H1 (cell line): ENCODE measurements at regions of chr14 and their contacts with region 1.

Region 1: DNA sequence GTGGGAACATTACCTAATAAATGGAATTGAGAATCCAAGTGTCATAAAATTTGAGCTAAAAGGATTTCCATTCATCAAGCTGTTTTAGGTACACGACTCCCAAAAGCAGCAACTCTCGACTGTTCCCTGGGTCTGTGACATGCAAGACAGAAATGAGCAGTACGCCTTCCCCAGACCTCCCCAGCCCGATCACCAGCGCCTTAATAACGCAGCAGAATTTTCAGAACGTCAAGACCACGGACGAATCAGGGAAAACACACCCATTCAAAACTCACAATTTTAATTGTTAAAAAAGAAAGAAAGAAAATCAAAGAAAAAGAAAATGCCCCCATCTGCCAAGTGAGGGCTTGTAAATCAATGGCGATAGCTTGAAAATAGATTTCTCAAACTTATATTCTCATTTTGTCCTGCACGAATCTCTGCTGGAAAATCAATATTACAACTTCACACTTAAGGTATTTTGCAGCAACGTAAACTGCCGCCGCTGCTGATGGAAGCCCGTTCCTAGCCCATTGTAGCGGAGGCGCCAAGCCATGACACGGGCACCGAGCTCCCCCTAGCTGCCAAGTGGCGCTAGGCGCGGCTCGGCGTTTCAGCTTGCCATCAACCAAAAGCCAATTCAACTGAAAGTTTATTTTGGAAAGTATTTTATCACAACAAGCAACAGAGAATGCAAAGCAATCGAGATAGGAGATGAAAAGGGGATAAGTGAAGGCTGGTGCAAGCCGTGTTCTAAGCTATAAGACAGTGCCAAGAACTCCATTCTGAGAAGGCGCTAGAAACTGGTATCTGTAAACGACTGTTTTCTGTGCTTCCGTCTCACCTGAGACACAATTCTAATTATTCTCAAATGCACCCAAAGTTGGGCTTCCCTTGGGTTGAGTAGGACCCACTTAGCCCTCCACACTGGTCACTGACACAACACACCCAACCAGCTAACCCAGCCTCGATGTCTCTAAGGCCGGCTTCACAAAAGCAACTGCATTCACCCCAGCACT is 5.5 kb downstream of the BCL11B start:
- DNase-seq: peak in 1 of 2 experiments; percentile 89
- H3K4me3 ChIP-seq: peak overlapping the region in 3 of 4 experiments; percentile 3 to 42 (median 23); a peak in 2 of 8 replicates
- H3K27ac ChIP-seq: no peak overlapping the region
- H3K4me1 ChIP-seq: peaks cover 27 to 36% (median 32%) of the 10 kb centered on the region in 4 experiments
- H3K27me3 ChIP-seq: peaks cover 0 to 7% (median 3%) of the 10 kb centered on the region in 4 experiments; a peak in 3 of 7 replicates
- CTCF ChIP-seq: peak; percentile 93 to 99 (median 97)
- EP300 ChIP-seq: no peak; a peak in 1 of 3 replicates
- POLR2A ChIP-seq: no peak
- RAD21 ChIP-seq: peak; percentile 99

Region 2: DNA sequence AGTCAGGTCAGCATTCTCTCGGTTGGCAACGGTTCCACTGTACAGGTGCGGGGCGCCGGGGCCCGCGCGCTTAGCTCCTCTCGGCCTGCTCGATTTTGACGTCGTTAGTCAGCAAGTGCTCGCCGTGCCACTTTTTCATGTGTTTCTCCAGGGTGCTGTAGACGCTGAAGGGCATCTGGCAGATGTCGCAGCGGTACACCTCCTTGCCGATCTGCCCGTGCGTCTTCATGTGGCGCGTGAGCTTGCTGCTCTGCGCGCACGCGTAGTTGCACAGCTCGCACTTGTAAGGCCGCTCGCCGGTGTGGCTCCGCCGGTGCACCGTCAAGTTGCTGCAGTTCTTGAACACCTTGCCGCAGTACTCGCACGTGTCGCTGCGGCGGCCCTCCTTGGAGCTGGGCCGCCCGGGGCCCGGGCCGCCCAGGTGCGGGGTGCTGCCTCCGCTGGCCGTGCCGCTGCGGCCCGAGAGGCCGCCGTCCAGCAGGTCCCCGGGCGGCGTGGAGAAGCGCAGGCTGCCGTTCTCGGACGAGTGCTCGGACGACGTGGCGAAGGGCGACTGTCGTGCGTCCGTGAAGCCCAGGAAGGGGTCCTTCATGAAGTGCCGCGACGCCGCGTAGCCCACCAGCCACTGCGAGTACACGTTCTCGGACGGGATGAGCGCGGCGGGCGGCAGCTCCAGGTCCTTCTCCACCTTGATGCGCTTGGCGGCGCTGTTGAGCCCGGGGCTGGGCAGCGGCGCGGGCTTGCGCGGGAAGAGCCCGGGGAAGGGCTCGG is 92.2 kb before region 1 on chr14:
- CTCF ChIA-PET with region 1: interaction called, 12 read pairs
- POLR2A ChIA-PET with region 1: interaction called, 4 read pairs
- DNase-seq: peak in 1 of 2 experiments; percentile 68
- H3K4me3 ChIP-seq: no peak overlapping the region
- H3K27ac ChIP-seq: no peak overlapping the region
- H3K4me1 ChIP-seq: peaks cover 0 to 11% (median 8%) of the 10 kb centered on the region in 4 experiments; a peak in 6 of 7 replicates
- H3K27me3 ChIP-seq: no peaks in the 10 kb centered on the region
- CTCF ChIP-seq: peak; percentile 46 to 53 (median 47)
- EP300 ChIP-seq: no peak
- POLR2A ChIP-seq: no peak
- RAD21 ChIP-seq: peak; percentile 34 to 47; a peak in 3 of 4 replicates

Region 3: GRCh38 chr14:99199846-99200653 is 66.4 kb before region 1 on chr14:
- CTCF ChIA-PET with region 1: interaction called, 19 read pairs
- POLR2A ChIA-PET with region 1: interaction called, 4 read pairs
- DNase-seq: no peak
- H3K4me3 ChIP-seq: no peak overlapping the region
- H3K27ac ChIP-seq: no peak overlapping the region
- H3K4me1 ChIP-seq: peaks cover 0 to 5% (median under 1%) of the 10 kb centered on the region in 4 experiments; a peak in 1 of 7 replicates
- H3K27me3 ChIP-seq: no peaks in the 10 kb centered on the region
- CTCF ChIP-seq: peak in 1 of 3 experiments; percentile 1; a peak in 2 of 4 replicates
- EP300 ChIP-seq: no peak
- POLR2A ChIP-seq: no peak
- RAD21 ChIP-seq: peak; percentile 5 to 37; a peak in 3 of 4 replicates

Region 4: DNA sequence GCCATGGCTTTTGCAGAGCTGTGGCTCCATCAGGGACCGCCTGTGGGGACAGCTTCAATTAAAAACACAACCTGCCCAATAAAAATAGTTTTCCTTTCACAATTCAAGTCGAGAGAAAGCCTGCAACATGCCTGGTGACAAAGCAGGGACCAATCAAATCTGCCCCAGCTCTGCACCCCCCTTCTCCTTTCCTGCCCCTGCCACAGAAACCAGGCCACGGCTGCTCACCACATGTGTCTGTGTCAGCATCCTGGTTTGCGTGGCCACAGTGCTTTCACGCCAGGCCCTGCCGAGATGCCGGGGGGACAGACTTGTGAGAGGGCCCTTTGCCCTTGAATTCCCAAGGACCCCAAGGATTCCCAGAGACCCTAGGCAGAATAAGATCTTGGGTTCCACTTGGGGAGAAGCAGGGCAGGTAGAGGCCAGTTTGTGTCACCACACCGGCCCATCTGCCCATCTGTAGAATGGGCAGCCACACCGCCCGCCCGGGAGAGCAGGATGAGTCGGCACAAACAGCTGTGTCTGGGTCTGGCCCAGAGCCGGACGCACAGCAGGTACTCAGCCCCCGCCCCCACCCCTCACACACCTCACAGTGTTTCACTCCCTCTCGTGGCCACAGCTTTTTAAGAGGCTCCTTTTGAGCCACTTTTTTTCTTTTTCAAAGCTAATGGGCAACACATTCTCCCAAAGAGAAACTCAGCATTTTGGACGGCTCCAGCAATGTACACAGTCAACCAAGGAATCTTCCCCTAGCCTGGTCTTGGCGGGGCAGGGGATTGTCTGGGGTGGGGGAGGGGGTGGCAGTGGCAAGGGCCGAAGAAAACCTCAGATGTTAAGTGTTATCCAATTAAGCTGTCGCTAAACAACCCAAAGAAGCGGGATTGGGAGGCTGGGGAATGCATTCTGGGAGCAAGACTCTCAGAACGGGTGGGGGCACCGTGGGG is 36.0 kb before region 1 on chr14:
- CTCF ChIA-PET with region 1: interaction called, 45 read pairs
- POLR2A ChIA-PET with region 1: interaction called, 4 read pairs
- DNase-seq: no peak
- H3K4me3 ChIP-seq: peak overlapping the region; percentile 36 to 60 (median 38); a peak in 6 of 8 replicates
- H3K27ac ChIP-seq: no peak overlapping the region
- H3K4me1 ChIP-seq: peaks cover 4 to 18% (median 14%) of the 10 kb centered on the region in 4 experiments
- H3K27me3 ChIP-seq: no peaks in the 10 kb centered on the region
- CTCF ChIP-seq: no peak
- EP300 ChIP-seq: no peak
- POLR2A ChIP-seq: no peak
- RAD21 ChIP-seq: peak in 1 of 2 experiments; percentile 7; a peak in 1 of 4 replicates

Region 5: GRCh38 chr14:99252940-99253868 is 13.3 kb before region 1 on chr14:
- CTCF ChIA-PET with region 1: interaction called, 12 read pairs
- POLR2A ChIA-PET with region 1: interaction called, 8 read pairs
- DNase-seq: no peak
- H3K4me3 ChIP-seq: no peak overlapping the region
- H3K27ac ChIP-seq: no peak overlapping the region
- H3K4me1 ChIP-seq: peaks cover 11 to 40% (median 19%) of the 10 kb centered on the region in 4 experiments
- H3K27me3 ChIP-seq: no peaks in the 10 kb centered on the region; a peak in 1 of 7 replicates
- CTCF ChIP-seq: no peak
- EP300 ChIP-seq: no peak
- POLR2A ChIP-seq: no peak
- RAD21 ChIP-seq: no peak